ENCODE measurements at regions of chr17 and their contacts with region 1.

Region 1: DNA sequence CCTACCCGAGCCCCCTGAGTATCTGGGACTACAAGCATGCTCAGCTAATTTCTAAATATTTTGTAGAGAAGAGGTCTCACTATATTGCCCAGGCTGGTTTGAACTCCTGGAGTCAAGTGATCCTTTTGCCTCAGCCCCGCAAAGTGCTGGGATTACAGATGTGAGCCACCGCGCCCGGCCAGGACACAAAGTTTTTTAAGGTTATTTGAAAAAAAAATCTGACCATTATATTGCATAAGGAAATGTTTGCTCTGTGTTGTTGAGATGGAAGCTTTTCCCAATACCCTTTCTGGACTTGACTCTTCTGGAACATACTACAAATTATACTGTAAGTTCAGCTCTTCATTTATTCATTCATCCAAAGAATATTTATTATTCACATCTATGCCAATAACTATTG is 133.3 kb upstream of the TMEM97 start:
- DNase-seq: no peak
- H3K4me3 ChIP-seq: no peak overlapping the region
- H3K27ac ChIP-seq: no peak overlapping the region
- H3K4me1 ChIP-seq: no peaks in the 10 kb centered on the region
- H3K27me3 ChIP-seq: no peaks in the 10 kb centered on the region
- CTCF ChIP-seq: no peak
- EP300 ChIP-seq: no peak
- POLR2A ChIP-seq: no peak
- RAD21 ChIP-seq: no peak

Region 2: DNA sequence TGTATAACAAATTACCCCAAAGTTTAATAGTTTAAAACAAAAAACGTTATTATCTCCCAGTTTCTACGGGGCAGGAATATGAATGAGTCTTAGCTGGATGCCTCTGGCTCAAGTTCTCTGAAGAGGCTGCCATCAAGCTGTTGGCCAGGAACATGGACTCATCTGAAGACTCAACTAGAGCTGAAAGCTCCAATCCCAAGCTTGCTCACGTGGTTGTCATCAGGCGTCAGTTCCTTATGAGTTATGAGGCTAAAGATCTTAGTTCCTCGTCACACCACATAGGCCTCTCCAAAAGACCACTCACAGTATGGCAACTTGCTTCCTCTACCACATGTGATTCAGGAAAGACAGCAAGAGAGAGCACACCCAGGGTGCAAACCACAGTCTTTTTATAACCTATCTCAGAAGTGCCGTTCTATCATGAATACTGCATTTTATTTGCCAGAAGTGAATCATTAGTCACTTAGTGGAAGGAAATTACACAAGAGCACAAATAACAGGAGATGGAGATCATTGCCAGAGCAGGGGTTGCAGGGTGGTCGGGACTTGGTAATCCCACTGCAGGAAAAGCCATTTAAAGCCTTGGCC is 191.8 kb before region 1 on chr17:
- CTCF ChIA-PET with region 1: no interaction called
- POLR2A ChIA-PET with region 1: no interaction called
- DNase-seq: no peak
- H3K4me3 ChIP-seq: no peak overlapping the region
- H3K27ac ChIP-seq: no peak overlapping the region
- H3K4me1 ChIP-seq: peaks cover 0 to 7% (median 2%) of the 10 kb centered on the region in 4 experiments; a peak in 3 of 7 replicates
- H3K27me3 ChIP-seq: no peaks in the 10 kb centered on the region; a peak in 1 of 7 replicates
- CTCF ChIP-seq: no peak
- EP300 ChIP-seq: no peak
- POLR2A ChIP-seq: no peak
- RAD21 ChIP-seq: no peak

Region 3: GRCh38 chr17:28173801-28174200 is 11.9 kb before region 1 on chr17:
- CTCF ChIA-PET with region 1: interaction called, 3 read pairs
- POLR2A ChIA-PET with region 1: interaction called, 11 read pairs
- DNase-seq: no peak
- H3K4me3 ChIP-seq: no peak overlapping the region
- H3K27ac ChIP-seq: 0 out of 2 replicates have a peak overlapping the region, but pooled peaks have one; percentile 1
- H3K4me1 ChIP-seq: peaks cover 4 to 26% (median 19%) of the 10 kb centered on the region in 4 experiments; a peak in 5 of 7 replicates
- H3K27me3 ChIP-seq: no peaks in the 10 kb centered on the region
- CTCF ChIP-seq: no peak
- EP300 ChIP-seq: no peak
- POLR2A ChIP-seq: no peak
- RAD21 ChIP-seq: no peak

Region 4: GRCh38 chr17:28240991-28241340 is 55.3 kb after region 1 on chr17:
- CTCF ChIA-PET with region 1: no interaction called
- POLR2A ChIA-PET with region 1: no interaction called
- DNase-seq: no peak
- H3K4me3 ChIP-seq: no peak overlapping the region
- H3K27ac ChIP-seq: no peak overlapping the region
- H3K4me1 ChIP-seq: no peaks in the 10 kb centered on the region
- H3K27me3 ChIP-seq: no peaks in the 10 kb centered on the region
- CTCF ChIP-seq: no peak
- EP300 ChIP-seq: no peak
- POLR2A ChIP-seq: no peak
- RAD21 ChIP-seq: no peak